HepG2 (cell line): ENCODE measurements at regions of chr10 and their contacts with region 1.

Region 1: DNA sequence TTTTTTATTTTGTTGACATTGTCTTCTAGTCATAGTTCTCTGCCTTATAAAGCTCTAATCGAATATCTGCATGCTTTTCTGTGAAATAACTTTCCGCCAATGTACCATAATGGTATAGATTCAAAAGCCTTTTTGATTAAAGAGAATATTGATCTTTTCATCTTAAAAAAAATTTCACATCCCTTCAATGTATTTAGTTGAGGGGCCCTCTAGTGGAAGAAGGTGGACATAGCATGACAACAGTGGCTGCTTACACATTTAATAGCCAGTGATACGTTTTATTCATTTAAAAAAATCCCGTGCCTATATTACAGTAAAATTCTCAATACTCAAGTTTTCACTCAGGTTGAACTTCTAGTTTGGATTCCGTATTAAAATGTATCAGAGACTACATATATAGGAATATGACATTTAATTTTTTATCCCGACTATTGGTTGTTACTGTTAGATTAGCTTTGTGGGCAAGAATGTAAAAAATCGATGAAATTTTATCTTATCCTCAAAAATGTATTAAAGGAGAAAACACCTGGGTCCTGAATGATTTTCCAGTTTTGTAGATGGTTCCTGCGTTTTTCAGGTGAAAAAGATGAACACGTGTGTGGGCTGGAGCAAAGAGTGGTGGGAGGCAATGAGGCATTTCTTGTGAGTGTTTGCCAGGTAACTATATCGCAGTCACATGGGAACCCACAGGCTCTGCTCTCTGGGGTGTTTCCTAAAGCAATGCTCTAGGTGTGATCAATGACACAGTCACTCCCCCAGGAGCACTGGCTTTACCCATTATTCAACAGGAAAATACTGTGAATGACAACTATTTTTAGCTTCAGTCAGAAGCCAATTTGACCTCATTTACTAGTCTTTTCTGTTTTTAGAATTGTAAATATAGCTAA is 24.1 kb upstream of the PNLIP start:
- DNase-seq: peak; percentile 28
- ATAC-seq: no peak
- H3K4me3 ChIP-seq: no peak overlapping the region
- H3K27ac ChIP-seq: no peak overlapping the region
- H3K4me1 ChIP-seq: no peaks in the 10 kb centered on the region
- H3K27me3 ChIP-seq: no peaks in the 10 kb centered on the region; a peak in 1 of 5 replicates
- CTCF ChIP-seq: peak; percentile 49
- EP300 ChIP-seq: no peak
- POLR2A ChIP-seq: no peak
- RAD21 ChIP-seq: no peak

Region 2: DNA sequence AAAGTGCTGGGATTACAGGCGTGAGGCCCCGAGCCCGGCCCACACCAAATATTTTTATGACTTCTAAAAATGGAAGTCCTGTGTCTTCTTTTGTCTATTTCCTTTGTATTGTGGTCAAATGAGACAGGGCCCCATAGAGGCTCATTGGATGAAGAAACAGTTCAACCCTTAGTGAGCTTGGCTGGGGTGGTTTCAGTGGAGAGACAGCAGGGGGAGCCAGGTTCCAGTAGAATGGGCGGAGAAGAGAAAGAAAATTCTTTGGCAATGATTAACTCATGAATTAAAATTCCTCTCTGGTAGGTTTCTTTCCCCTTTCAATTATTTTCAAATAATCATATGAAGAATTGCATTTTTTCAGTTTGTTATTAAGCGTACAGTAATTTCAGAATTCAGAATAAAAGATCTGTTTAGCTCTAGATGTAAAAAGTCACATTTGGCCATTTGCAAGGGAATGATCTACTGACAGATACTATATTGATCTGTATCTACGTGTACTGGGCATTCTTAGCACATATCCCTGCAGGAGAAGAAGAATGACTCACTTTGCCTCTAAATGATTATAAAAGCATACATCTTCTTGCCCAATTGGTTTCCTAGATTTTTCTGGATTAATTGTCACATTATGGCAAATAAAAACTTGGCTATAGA is 50.8 kb before region 1 on chr10:
- CTCF ChIA-PET with region 1: no interaction called
- POLR2A ChIA-PET with region 1: no interaction called
- in situ Hi-C with region 1: no loop called
- intact Hi-C with region 1: loop called (anchors 2 kb)
- DNase-seq: peak; percentile 20
- ATAC-seq: peak; percentile 92
- H3K4me3 ChIP-seq: no peak overlapping the region
- H3K27ac ChIP-seq: no peak overlapping the region
- H3K4me1 ChIP-seq: no peaks in the 10 kb centered on the region
- H3K27me3 ChIP-seq: no peaks in the 10 kb centered on the region
- CTCF ChIP-seq: peak; percentile 43
- EP300 ChIP-seq: no peak
- POLR2A ChIP-seq: no peak
- RAD21 ChIP-seq: no peak

Region 3: DNA sequence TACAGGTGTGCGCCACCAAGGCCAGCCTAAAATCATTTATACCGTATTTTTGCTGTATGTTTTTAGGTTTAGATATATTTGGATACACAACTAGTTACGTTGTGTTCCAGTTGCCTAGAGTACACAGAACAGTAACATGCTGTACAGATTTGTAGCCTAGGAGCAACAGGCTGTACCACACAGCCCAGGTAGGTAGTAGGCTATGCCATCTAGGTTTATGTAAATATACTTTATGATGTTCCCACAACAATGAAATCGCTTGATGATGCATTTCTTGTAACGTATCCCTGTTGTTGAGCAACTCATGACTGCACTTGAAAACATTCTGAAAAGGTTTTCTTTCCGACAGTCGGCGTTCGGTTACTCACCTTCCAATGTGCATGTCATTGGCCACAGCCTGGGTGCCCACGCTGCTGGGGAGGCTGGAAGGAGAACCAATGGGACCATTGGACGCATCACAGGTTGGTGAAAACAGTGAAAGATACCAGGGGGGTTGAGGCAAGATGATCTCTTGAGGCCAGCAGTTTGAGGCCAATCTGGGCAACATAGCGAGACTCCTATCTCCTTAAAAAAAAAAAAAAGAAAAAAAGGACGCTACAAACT is 31.8 kb after region 1 on chr10:
- CTCF ChIA-PET with region 1: no interaction called
- POLR2A ChIA-PET with region 1: no interaction called
- in situ Hi-C with region 1: no loop called
- intact Hi-C with region 1: no loop called
- DNase-seq: no peak
- ATAC-seq: no peak
- H3K4me3 ChIP-seq: no peak overlapping the region
- H3K27ac ChIP-seq: no peak overlapping the region
- H3K4me1 ChIP-seq: no peaks in the 10 kb centered on the region
- H3K27me3 ChIP-seq: no peaks in the 10 kb centered on the region
- CTCF ChIP-seq: no peak
- EP300 ChIP-seq: no peak
- POLR2A ChIP-seq: no peak
- RAD21 ChIP-seq: no peak

Region 4: GRCh38 chr10:116637830-116638229 is 116.2 kb after region 1 on chr10:
- CTCF ChIA-PET with region 1: no interaction called
- POLR2A ChIA-PET with region 1: no interaction called
- in situ Hi-C with region 1: no loop called
- intact Hi-C with region 1: no loop called
- DNase-seq: no peak
- ATAC-seq: no peak
- H3K4me3 ChIP-seq: no peak overlapping the region
- H3K27ac ChIP-seq: no peak overlapping the region
- H3K4me1 ChIP-seq: no peaks in the 10 kb centered on the region
- H3K27me3 ChIP-seq: no peaks in the 10 kb centered on the region
- CTCF ChIP-seq: no peak
- EP300 ChIP-seq: no peak
- POLR2A ChIP-seq: no peak
- RAD21 ChIP-seq: no peak